OCI-LY7 (cell line): ENCODE measurements at regions of chr2 and their contacts with region 1.

Region 1: DNA sequence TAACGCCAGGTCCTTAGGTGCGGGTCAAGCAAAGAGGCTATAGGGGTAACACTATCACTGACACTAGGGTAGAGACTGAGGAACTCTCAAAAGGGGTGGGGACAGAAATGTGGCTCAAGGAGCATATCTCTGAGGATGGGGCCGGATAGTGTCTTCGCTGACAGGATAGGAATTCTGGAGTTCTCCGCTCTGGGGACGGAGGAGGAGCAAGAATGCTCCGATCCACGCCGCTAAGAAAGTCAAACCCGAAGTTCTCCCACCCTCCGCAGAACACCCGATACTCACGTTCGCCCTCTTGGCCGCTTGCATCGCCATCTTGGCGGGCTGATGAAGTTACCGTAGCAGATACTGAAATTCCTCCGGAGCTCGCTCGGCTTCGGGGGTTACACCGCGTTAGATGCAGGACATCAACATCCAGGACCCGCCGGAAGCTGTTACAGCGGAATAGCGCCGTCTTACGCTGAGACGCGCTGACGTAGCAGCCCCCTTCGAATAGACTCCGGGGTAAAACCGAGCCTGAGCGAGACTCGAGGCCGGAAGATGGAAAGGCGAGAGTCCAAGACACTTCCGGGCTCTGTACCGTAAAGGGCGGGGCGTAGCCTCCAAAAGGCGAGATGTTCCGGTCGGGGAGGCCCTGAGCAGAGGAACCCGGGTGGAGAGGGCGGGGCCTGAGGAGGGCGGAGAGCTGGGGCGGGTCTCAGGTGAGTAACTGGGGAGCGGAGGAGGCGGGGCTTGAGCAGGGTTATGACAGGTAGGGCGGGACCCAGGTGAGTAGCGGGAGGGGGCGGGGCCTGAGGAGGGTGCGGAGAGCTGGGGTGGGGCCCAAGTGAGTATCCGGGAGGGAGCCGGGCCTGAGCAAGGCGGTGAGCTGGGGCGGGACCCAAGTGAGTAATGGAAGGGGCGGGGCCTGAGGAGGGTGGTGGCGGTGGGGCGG is at the start of gene SF3B6:
- DNase-seq: peak; percentile 99
- H3K4me3 ChIP-seq: peak within 1 kb of the TSS; percentile 80
- H3K27ac ChIP-seq: peak within 1 kb of the TSS; percentile 54
- H3K4me1 ChIP-seq: peaks cover 19% of the 10 kb centered on the region
- CTCF ChIP-seq: no peak
- total RNA-seq, gene SF3B6: 136 and 143 TPM in 2 replicates

Region 2: GRCh38 chr2:23939987-23940717 is 136.0 kb before region 1 on chr2 and contains the start of gene UBXN2A:
- CTCF ChIA-PET with region 1: no interaction called
- POLR2A ChIA-PET with region 1: interaction called, 3 read pairs
- intact Hi-C with region 1: loop called (anchors 1 kb)
- DNase-seq: peak; percentile 89
- H3K4me3 ChIP-seq: peak within 1 kb of the TSS; percentile 72
- H3K27ac ChIP-seq: peak within 1 kb of the TSS; percentile 73
- H3K4me1 ChIP-seq: peaks cover 18% of the 10 kb centered on the region
- CTCF ChIP-seq: no peak
- total RNA-seq, gene UBXN2A: 10.0 and 11.3 TPM in 2 replicates

Region 3: GRCh38 chr2:24046930-24047702 is 29.1 kb before region 1 on chr2 and contains the start of gene WDCP:
- CTCF ChIA-PET with region 1: interaction called, 10 read pairs
- POLR2A ChIA-PET with region 1: interaction called, 16 read pairs
- intact Hi-C with region 1: no loop called
- DNase-seq: peak; percentile 98
- H3K4me3 ChIP-seq: peak within 1 kb of the TSS; percentile 85
- H3K27ac ChIP-seq: peak within 1 kb of the TSS; percentile 25
- H3K4me1 ChIP-seq: peaks cover 24% of the 10 kb centered on the region
- CTCF ChIP-seq: no peak
- total RNA-seq, gene WDCP: 10.9 and 13.9 TPM in 2 replicates

Region 4: GRCh38 chr2:24527536-24527935 is 451.4 kb after region 1 on chr2:
- CTCF ChIA-PET with region 1: no interaction called
- POLR2A ChIA-PET with region 1: no interaction called
- intact Hi-C with region 1: no loop called
- DNase-seq: no peak
- H3K4me3 ChIP-seq: no peak overlapping the region
- H3K27ac ChIP-seq: no peak overlapping the region
- H3K4me1 ChIP-seq: no peaks in the 10 kb centered on the region
- CTCF ChIP-seq: no peak